Mammary epithelial cell (primary cell): ENCODE measurements at regions of chr19 and their contacts with region 1.

Region 1: GRCh38 chr19:21020298-21021227 is at the start of gene ZNF430:
- DNase-seq: peak; percentile 94
- H3K4me3 ChIP-seq: peak within 1 kb of the TSS; percentile 70 to 89 (median 75)
- H3K27ac ChIP-seq: peak within 1 kb of the TSS; percentile 98
- H3K4me1 ChIP-seq: peaks cover 22% of the 10 kb centered on the region
- H3K27me3 ChIP-seq: no peaks in the 10 kb centered on the region
- CTCF ChIP-seq: no peak
- total RNA-seq, gene ZNF430: 14.1 to 19.3 TPM

Region 2: GRCh38 chr19:20776083-20777076 is 244.2 kb before region 1 on chr19 and contains the start of gene ZNF66:
- CTCF ChIA-PET with region 1: no interaction called
- dilution Hi-C with region 1: no loop called
- in situ Hi-C with region 1: no loop called
- intact Hi-C with region 1: loop called (anchors 5 kb)
- DNase-seq: peak; percentile 96
- H3K4me3 ChIP-seq: peak within 1 kb of the TSS; percentile 58 to 77 (median 60)
- H3K27ac ChIP-seq: peak within 1 kb of the TSS; percentile 19
- H3K4me1 ChIP-seq: no peaks in the 10 kb centered on the region
- H3K27me3 ChIP-seq: no peaks in the 10 kb centered on the region
- CTCF ChIP-seq: no peak
- total RNA-seq, gene ZNF66: 5.3 to 6.1 TPM

Region 3: GRCh38 chr19:20923077-20923871 is 97.3 kb before region 1 on chr19 and contains the start of gene ZNF85:
- CTCF ChIA-PET with region 1: no interaction called
- dilution Hi-C with region 1: no loop called
- in situ Hi-C with region 1: no loop called
- intact Hi-C with region 1: loop called (anchors 1 kb)
- DNase-seq: peak; percentile 90
- H3K4me3 ChIP-seq: peak within 1 kb of the TSS; percentile 71 to 93 (median 76)
- H3K27ac ChIP-seq: peak within 1 kb of the TSS; percentile 72
- H3K4me1 ChIP-seq: no peaks in the 10 kb centered on the region
- H3K27me3 ChIP-seq: no peaks in the 10 kb centered on the region
- CTCF ChIP-seq: no peak
- total RNA-seq, gene ZNF85: 9.8 to 10.5 TPM

Region 4: DNA sequence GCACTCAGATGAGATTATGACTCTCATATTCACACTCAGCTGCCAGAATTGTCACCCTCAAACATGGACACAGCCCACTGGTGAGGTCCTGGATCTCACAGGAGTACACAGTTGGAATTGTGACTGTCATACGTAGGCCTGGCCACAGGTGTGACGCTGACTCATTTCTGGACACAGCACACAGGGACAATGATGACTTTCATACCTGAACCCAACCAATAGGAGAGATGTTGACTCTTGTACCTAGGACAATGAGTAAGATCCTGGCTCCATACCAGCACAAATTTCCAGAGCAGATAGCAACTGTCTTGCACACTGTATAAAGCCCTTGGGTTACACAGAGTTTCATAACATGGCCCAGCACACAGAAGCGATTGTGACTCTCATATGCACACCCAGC is 51.1 kb before region 1 on chr19:
- CTCF ChIA-PET with region 1: no interaction called
- dilution Hi-C with region 1: no loop called
- in situ Hi-C with region 1: no loop called
- intact Hi-C with region 1: no loop called
- DNase-seq: peak; percentile 72
- H3K4me3 ChIP-seq: no peak overlapping the region
- H3K27ac ChIP-seq: no peak overlapping the region
- H3K4me1 ChIP-seq: no peaks in the 10 kb centered on the region
- H3K27me3 ChIP-seq: no peaks in the 10 kb centered on the region
- CTCF ChIP-seq: no peak

Region 5: GRCh38 chr19:21052902-21053301 is 32.3 kb after region 1 on chr19:
- CTCF ChIA-PET with region 1: no interaction called
- dilution Hi-C with region 1: no loop called
- in situ Hi-C with region 1: no loop called
- intact Hi-C with region 1: no loop called
- DNase-seq: no peak
- H3K4me3 ChIP-seq: no peak overlapping the region
- H3K27ac ChIP-seq: no peak overlapping the region
- H3K4me1 ChIP-seq: no peaks in the 10 kb centered on the region
- H3K27me3 ChIP-seq: no peaks in the 10 kb centered on the region
- CTCF ChIP-seq: no peak